ENCODE measurements at regions of chr14 and their contacts with region 1.

Region 1: GRCh38 chr14:92951912-92952471 is 29.0 kb downstream of the CHGA start:
- DNase-seq: peak; percentile 69 to 92 (median 82)
- ATAC-seq: peak; percentile 98
- H3K4me3 ChIP-seq: no peak overlapping the region
- H3K4me3 Mint-ChIP-seq: no peak overlapping the region
- H3K27ac ChIP-seq: no peak overlapping the region
- H3K27ac Mint-ChIP-seq: no peak overlapping the region
- H3K4me1 ChIP-seq: no peaks in the 10 kb centered on the region
- H3K4me1 Mint-ChIP-seq: peaks cover 4% of the 10 kb centered on the region
- H3K27me3 ChIP-seq: no peaks in the 10 kb centered on the region
- H3K27me3 Mint-ChIP-seq: no peaks in the 10 kb centered on the region
- CTCF ChIP-seq: peak; percentile 93

Region 2: GRCh38 chr14:91439345-91439744 is 1512.6 kb before region 1 on chr14:
- CTCF ChIA-PET with region 1: no interaction called
- POLR2A ChIA-PET with region 1: no interaction called
- intact Hi-C with region 1: no loop called
- DNase-seq: no peak
- ATAC-seq: no peak
- H3K4me3 ChIP-seq: no peak overlapping the region
- H3K4me3 Mint-ChIP-seq: no peak overlapping the region
- H3K27ac ChIP-seq: no peak overlapping the region
- H3K27ac Mint-ChIP-seq: no peak overlapping the region
- H3K4me1 ChIP-seq: no peaks in the 10 kb centered on the region
- H3K4me1 Mint-ChIP-seq: no peaks in the 10 kb centered on the region
- H3K27me3 ChIP-seq: peaks cover 0 to 5% of the 10 kb centered on the region in 2 experiments
- H3K27me3 Mint-ChIP-seq: peaks cover 2% of the 10 kb centered on the region
- CTCF ChIP-seq: no peak

Region 3: DNA sequence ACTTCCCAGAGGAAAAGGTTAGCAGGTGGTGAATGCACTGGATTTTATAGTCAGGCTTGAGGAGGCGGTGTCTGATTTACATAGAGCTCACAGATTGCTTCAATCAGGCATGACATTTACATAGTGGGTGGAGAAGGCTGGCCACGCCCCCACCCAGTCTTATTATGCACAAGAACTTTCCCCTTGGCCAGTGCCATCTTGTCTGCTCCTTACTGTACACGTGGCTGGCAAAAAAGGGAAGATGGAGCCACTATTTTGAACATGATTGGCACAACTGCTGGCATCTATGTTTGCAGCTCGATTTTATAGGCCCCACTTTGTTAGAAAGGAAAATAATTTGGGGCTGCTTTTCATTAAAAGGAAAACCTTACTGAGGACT is 192.7 kb before region 1 on chr14:
- CTCF ChIA-PET with region 1: no interaction called
- POLR2A ChIA-PET with region 1: no interaction called
- intact Hi-C with region 1: no loop called
- DNase-seq: peak in 2 of 9 experiments; percentile 11 to 15
- ATAC-seq: no peak
- H3K4me3 ChIP-seq: no peak overlapping the region
- H3K4me3 Mint-ChIP-seq: no peak overlapping the region
- H3K27ac ChIP-seq: no peak overlapping the region
- H3K27ac Mint-ChIP-seq: no peak overlapping the region
- H3K4me1 ChIP-seq: no peaks in the 10 kb centered on the region
- H3K4me1 Mint-ChIP-seq: peaks cover 8% of the 10 kb centered on the region
- H3K27me3 ChIP-seq: no peaks in the 10 kb centered on the region
- H3K27me3 Mint-ChIP-seq: no peaks in the 10 kb centered on the region
- CTCF ChIP-seq: no peak

Region 4: DNA sequence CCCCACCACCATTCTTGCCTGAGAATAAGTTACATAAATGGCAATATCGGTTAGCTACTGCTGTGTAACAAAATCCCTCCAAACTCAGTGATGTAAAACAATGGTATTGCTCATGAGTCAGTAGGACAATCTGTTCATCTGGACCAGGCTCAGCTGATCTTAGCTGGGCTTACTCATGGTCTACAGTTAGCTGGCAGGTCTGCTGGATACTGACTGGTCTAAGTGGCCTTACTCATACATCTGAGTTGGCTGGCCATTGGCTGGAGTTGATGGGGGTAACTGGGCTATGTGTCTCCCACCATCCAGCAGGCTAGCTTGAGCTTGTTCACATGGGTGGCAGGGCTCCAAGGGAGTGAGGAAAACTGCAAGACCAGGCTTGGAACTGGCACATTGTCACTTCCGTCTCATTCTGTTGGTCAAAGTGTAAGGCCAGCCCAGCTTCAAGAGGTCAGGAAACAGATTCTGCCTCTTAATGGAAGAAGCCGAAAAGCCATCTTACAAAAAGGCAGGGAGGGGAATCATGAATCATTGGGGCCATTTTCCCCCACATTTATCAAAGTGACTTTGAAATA is 85.7 kb before region 1 on chr14:
- CTCF ChIA-PET with region 1: no interaction called
- POLR2A ChIA-PET with region 1: no interaction called
- intact Hi-C with region 1: no loop called
- DNase-seq: no peak
- ATAC-seq: no peak
- H3K4me3 ChIP-seq: no peak overlapping the region
- H3K4me3 Mint-ChIP-seq: no peak overlapping the region
- H3K27ac ChIP-seq: no peak overlapping the region
- H3K27ac Mint-ChIP-seq: no peak overlapping the region
- H3K4me1 ChIP-seq: no peaks in the 10 kb centered on the region
- H3K4me1 Mint-ChIP-seq: no peaks in the 10 kb centered on the region
- H3K27me3 ChIP-seq: no peaks in the 10 kb centered on the region
- H3K27me3 Mint-ChIP-seq: peaks cover 8% of the 10 kb centered on the region
- CTCF ChIP-seq: no peak

Region 5: DNA sequence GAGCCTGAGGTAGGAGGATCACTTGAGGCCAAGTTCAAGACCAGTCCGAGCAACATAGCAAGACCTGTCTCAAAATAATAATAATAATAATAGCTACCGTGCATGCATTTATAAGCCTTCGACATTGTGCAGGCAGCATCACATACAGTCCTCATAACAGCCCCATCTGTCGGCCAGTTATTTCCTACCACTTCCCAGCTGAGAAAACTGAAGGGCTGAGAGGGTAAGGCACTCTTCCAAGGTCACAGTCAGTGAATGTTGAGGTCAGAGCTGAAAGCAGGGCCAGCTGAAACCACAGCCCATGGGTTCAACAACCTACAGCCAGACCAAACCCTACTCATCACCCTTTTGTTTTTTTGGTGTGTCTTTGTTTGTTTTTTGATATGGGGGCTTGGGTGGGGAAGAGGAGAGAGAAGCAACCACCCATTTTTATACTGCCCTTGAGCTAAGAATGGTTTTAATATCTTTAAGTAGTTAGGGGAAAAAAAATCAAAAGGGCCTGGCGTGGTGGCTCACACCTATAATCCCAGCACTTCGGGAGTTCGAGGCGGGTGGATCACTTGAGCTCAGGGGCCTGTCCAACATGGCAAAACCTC is 180.6 kb after region 1 on chr14:
- CTCF ChIA-PET with region 1: interaction called, 166 read pairs
- POLR2A ChIA-PET with region 1: interaction called, 3 read pairs
- intact Hi-C with region 1: no loop called
- DNase-seq: peak in 7 of 9 experiments; percentile 14 to 67 (median 44)
- ATAC-seq: peak; percentile 56
- H3K4me3 ChIP-seq: no peak overlapping the region
- H3K4me3 Mint-ChIP-seq: no peak overlapping the region
- H3K27ac ChIP-seq: no peak overlapping the region
- H3K27ac Mint-ChIP-seq: no peak overlapping the region
- H3K4me1 ChIP-seq: no peaks in the 10 kb centered on the region
- H3K4me1 Mint-ChIP-seq: no peaks in the 10 kb centered on the region
- H3K27me3 ChIP-seq: peaks cover 0 to 2% of the 10 kb centered on the region in 2 experiments
- H3K27me3 Mint-ChIP-seq: no peaks in the 10 kb centered on the region
- CTCF ChIP-seq: peak; percentile 32

Region 6: DNA sequence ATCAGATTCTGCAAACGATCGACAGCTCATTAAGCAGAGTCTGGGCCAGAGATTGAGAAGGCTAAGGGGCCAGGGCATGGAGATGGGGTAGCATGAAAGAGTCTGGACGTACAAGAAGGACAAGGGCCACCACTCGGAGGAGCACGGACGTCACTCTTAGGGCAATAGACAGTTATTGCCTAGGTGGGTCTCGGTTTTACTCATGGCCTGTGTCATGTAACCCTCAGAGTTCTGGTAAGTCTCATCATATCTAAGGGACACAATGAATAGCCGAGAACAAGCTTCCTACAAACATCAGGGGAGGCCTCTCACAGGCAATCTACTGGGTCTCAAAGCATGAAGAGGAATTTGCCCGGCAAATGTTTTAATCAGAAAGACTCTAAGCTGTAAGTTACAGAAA is 194.1 kb after region 1 on chr14:
- CTCF ChIA-PET with region 1: interaction called, 166 read pairs
- POLR2A ChIA-PET with region 1: no interaction called
- intact Hi-C with region 1: no loop called
- DNase-seq: no peak
- ATAC-seq: no peak
- H3K4me3 ChIP-seq: no peak overlapping the region
- H3K4me3 Mint-ChIP-seq: no peak overlapping the region
- H3K27ac ChIP-seq: no peak overlapping the region
- H3K27ac Mint-ChIP-seq: no peak overlapping the region
- H3K4me1 ChIP-seq: no peaks in the 10 kb centered on the region
- H3K4me1 Mint-ChIP-seq: no peaks in the 10 kb centered on the region
- H3K27me3 ChIP-seq: no peaks in the 10 kb centered on the region
- H3K27me3 Mint-ChIP-seq: peaks cover 13% of the 10 kb centered on the region
- CTCF ChIP-seq: no peak

Region 7: GRCh38 chr14:93219103-93219726 is 267.2 kb after region 1 on chr14:
- CTCF ChIA-PET with region 1: interaction called, 4 read pairs
- POLR2A ChIA-PET with region 1: no interaction called
- intact Hi-C with region 1: loop called in 1 of 2 experiments (anchors 1 kb)
- DNase-seq: peak in 5 of 9 experiments; percentile 47 to 77 (median 65)
- ATAC-seq: peak; percentile 84
- H3K4me3 ChIP-seq: no peak overlapping the region
- H3K4me3 Mint-ChIP-seq: no peak overlapping the region
- H3K27ac ChIP-seq: no peak overlapping the region
- H3K27ac Mint-ChIP-seq: no peak overlapping the region
- H3K4me1 ChIP-seq: no peaks in the 10 kb centered on the region
- H3K4me1 Mint-ChIP-seq: no peaks in the 10 kb centered on the region
- H3K27me3 ChIP-seq: no peaks in the 10 kb centered on the region
- H3K27me3 Mint-ChIP-seq: no peaks in the 10 kb centered on the region
- CTCF ChIP-seq: peak; percentile 76